WTC11 (cell line): ENCODE measurements at regions of chr22 and their contacts with region 1.

Region 1: GRCh38 chr22:48251629-48252028 is 1489.2 kb downstream of the TBC1D22A start:
- DNase-seq: no peak
- ATAC-seq: no peak
- H3K4me3 Mint-ChIP-seq: no peak overlapping the region
- H3K27ac Mint-ChIP-seq: no peak overlapping the region
- H3K4me1 Mint-ChIP-seq: peaks cover 17% of the 10 kb centered on the region
- H3K27me3 Mint-ChIP-seq: peaks cover 6% of the 10 kb centered on the region; the same call in 1 of the 2 replicates
- CTCF ChIP-seq: no peak

Region 2: DNA sequence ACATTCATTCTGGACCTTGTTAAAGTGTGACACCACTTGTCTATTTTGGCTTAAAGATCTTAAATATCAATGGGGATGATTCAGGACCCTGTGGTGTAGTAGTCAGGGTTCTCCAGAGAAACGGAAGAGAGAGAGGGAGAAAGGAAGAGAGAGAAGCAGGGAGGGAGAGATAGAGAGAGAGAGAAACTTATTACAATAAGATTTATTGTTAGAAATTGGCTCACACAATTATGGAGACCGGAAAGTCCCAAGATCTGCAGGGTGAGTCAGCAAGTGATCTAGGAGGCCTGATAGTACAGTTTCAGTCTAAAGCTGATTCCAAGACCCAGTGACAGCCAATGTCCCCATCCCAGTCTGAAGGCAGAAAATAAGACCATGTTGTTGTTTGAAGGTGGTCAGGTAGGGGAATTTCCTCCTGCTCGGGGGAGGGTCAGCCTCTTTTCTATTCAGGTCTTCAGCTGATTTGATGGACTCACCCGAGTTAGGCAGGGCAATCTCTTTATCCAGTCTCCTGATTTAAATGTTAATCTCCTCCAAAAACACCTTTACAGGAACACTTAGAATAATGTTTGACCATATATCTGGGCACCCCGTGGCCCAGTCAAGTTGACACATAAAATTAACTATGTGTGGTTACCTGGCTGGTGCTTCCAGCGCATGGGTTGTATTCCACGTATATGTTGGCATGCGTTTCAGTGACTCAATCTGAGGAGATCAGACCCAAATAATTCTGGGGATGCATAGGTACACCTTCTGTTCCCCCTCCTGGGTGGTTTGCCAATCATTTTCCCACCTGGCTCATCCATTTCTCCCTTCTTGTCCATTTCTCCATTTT is 138.7 kb before region 1 on chr22:
- CTCF ChIA-PET with region 1: no interaction called
- POLR2A ChIA-PET with region 1: no interaction called
- DNase-seq: no peak
- ATAC-seq: no peak
- H3K4me3 Mint-ChIP-seq: no peak overlapping the region
- H3K27ac Mint-ChIP-seq: no peak overlapping the region
- H3K4me1 Mint-ChIP-seq: peaks cover 7% of the 10 kb centered on the region
- H3K27me3 Mint-ChIP-seq: peaks cover 3% of the 10 kb centered on the region; the same call in 1 of the 2 replicates
- CTCF ChIP-seq: no peak

Region 3: DNA sequence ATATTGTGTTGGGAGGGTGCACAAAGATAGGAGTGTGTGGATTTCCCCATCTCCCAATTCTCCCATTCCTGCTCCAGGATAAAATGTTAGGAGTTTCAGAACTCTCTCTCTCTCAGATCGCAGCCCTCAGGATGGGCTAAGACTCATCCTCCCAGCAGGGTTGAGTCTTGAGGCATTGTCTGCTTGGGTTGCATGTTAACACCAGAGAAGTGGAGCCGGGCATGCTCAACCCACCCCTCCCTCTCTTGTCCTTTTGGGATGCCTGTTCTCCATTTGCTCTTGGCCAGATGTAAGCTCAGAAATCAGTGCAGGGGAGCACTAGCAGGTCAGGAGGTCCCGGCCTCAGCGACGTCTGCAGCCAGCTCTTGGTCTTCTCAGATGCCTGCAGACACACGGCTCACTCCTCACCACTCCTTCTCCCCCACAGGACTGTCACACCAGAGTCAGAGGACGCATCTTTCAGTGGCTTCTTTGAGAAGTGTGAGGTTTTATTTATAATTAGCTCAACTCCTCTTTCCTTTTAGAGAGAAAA is 32.7 kb before region 1 on chr22:
- CTCF ChIA-PET with region 1: no interaction called
- POLR2A ChIA-PET with region 1: no interaction called
- DNase-seq: no peak
- ATAC-seq: peak; percentile 82
- H3K4me3 Mint-ChIP-seq: no peak overlapping the region
- H3K27ac Mint-ChIP-seq: no peak overlapping the region
- H3K4me1 Mint-ChIP-seq: peaks cover 20% of the 10 kb centered on the region
- H3K27me3 Mint-ChIP-seq: no peaks in the 10 kb centered on the region
- CTCF ChIP-seq: no peak

Region 4: GRCh38 chr22:48367731-48368130 is 116.1 kb after region 1 on chr22:
- CTCF ChIA-PET with region 1: no interaction called
- POLR2A ChIA-PET with region 1: interaction called, 10 read pairs
- DNase-seq: no peak
- ATAC-seq: no peak
- H3K4me3 Mint-ChIP-seq: no peak overlapping the region
- H3K27ac Mint-ChIP-seq: no peak overlapping the region
- H3K4me1 Mint-ChIP-seq: peaks cover 52% of the 10 kb centered on the region
- H3K27me3 Mint-ChIP-seq: no peaks in the 10 kb centered on the region; the same call in none of the 2 replicates
- CTCF ChIP-seq: no peak